ENCODE measurements at regions of chr17 and their contacts with region 1.

Region 1: GRCh38 chr17:31008374-31009041 is 37.7 kb downstream of the RNF135 start:
- DNase-seq: peak; percentile 65
- H3K4me3 Mint-ChIP-seq: peak overlapping the region; percentile 85
- H3K27ac Mint-ChIP-seq: peak overlapping the region; percentile 82
- H3K4me1 Mint-ChIP-seq: peaks cover 15% of the 10 kb centered on the region
- H3K27me3 Mint-ChIP-seq: peaks cover 2% of the 10 kb centered on the region

Region 2: GRCh38 chr17:30970831-30971567 is 37.5 kb before region 1 on chr17 and contains the start of gene RNF135:
- CTCF ChIA-PET with region 1: no interaction called
- intact Hi-C with region 1: loop called (anchors 5 kb)
- DNase-seq: peak; percentile 60
- H3K4me3 Mint-ChIP-seq: peak within 1 kb of the TSS; percentile 88
- H3K27ac Mint-ChIP-seq: peak within 1 kb of the TSS; percentile 79
- H3K4me1 Mint-ChIP-seq: peaks cover 31% of the 10 kb centered on the region
- H3K27me3 Mint-ChIP-seq: peaks cover 9% of the 10 kb centered on the region
- total RNA-seq, gene RNF135: 5.0 to 5.4 TPM

Region 3: DNA sequence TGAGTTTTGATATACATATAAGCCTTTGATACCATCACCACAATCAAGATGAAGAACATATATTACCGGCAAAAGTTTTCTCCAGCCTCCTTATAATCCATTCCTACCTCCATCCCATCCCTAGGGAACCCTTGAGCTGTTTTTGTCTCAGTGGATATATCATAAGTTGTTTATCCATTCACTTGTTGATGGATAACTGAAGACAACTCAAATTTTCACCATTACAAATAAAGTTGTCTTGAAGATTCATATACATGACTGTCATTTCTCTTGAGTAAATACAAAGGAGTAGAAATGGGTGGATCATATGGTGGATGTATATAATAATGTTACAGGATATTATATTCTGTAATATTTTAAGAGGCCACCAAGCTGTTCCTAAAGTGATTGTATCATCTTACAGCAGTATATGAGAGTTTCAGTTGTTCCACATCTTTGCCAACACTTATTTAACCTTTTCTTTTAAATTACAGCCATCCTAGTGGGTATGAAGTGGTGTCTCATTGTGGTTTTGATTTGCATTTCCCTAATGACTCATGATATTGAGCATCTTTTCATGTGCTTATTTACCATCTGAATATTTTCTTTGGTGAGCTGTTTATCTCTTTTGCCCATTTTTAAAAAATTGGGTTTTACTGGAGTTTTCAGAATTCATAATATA is 103.6 kb after region 1 on chr17:
- CTCF ChIA-PET with region 1: no interaction called
- intact Hi-C with region 1: no loop called
- DNase-seq: no peak
- H3K4me3 Mint-ChIP-seq: no peak overlapping the region
- H3K27ac Mint-ChIP-seq: no peak overlapping the region
- H3K4me1 Mint-ChIP-seq: peaks cover 16% of the 10 kb centered on the region
- H3K27me3 Mint-ChIP-seq: no peaks in the 10 kb centered on the region

Measured in activated naive CD4-positive, alpha-beta T cell treated with anti-CD3 and anti-CD28 coated beads for 36 hours (primary cell).